CD14-positive monocyte (primary cell): ENCODE measurements at regions of chr14 and their contacts with region 1.

Region 1: DNA sequence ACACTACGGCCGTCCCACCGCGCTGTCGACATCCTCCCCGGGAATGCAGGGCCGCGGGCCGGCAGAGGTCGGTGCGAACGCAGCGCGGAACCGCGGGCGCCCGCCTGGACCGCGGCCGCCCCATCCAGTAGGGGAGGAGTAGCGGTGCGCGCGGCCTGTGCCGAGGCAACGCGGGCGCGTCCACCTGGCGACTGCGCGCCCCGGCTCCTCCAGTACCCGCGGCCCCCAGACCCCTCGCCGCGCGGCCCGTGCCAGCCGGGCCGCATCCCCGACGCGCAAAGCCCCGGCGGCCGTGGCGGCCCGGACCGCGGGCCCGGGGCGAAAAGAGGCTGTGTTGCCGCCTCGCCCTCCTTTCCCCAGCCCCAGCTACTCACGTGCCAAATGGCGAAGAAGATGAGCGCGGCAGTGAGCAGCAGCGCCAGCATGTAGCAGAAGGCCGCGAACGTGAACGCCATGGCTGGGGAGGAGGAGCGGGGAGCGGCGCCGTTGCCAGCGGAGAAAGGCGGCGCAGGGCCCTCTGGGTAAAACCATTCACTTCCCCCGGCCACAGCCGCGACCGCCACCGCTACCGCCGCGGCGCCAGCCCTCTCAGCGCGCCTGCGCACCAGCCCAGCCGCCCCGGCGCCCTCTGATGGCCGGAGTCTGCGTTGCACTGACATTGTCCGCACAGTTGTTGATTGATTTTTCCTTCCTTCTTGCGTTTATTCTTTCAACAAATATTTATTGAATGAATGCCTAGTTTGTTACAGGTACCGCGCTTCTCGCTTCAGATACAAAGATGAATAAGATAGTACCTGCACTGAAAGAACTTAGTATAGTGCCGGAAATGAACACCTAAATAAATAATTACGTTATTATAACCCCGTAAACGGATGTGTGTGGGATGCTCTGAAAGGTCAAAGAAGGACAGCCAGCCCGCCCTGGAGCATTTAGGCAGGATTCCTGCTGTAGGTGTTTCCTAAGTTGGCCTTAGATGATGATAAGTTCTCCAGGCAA is at the start of gene CNIH1:
- DNase-seq: peak; percentile 89 to 91 (median 90)
- H3K4me3 ChIP-seq: peak within 1 kb of the TSS; percentile 55 to 90 (median 77)
- H3K4me3 Mint-ChIP-seq: peak within 1 kb of the TSS; percentile 76 to 92
- H3K27ac ChIP-seq: peak within 1 kb of the TSS; percentile 83 to 86
- H3K27ac Mint-ChIP-seq: peak within 1 kb of the TSS; percentile 83 to 92 (median 87)
- H3K4me1 ChIP-seq: peaks cover 22 to 32% of the 10 kb centered on the region in 2 donors
- H3K4me1 Mint-ChIP-seq: peaks cover 41% of the 10 kb centered on the region
- H3K27me3 ChIP-seq: no peaks in the 10 kb centered on the region
- H3K27me3 Mint-ChIP-seq: no peaks in the 10 kb centered on the region
- CTCF ChIP-seq: peak; percentile 92
- polyA plus RNA-seq, gene CNIH1: 109 to 162 (median 138) TPM

Region 2: DNA sequence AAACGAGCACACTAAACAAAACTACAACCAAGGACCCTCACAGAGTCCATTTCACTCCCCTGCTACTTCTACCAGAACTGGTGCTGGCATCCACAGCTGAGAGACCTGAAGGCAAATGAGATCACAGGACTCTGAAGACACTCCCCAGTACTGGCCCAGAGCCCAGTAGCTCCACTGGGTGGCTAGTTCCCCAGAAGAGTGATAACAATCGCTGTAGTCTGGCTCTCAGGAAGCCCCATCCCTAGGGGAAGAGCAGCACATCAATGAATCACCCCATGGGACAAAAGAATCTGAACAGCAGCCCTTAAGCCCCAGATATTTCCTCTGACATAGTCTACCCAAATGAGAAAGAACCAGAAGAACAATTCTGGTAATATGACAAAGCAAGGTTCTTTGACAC is 293.9 kb before region 1 on chr14:
- intact Hi-C with region 1: no loop called
- DNase-seq: no peak
- H3K4me3 ChIP-seq: no peak overlapping the region
- H3K4me3 Mint-ChIP-seq: no peak overlapping the region
- H3K27ac ChIP-seq: no peak overlapping the region
- H3K27ac Mint-ChIP-seq: no peak overlapping the region
- H3K4me1 ChIP-seq: no peaks in the 10 kb centered on the region
- H3K4me1 Mint-ChIP-seq: no peaks in the 10 kb centered on the region
- H3K27me3 ChIP-seq: no peaks in the 10 kb centered on the region
- H3K27me3 Mint-ChIP-seq: peaks cover 0 to under 1% (median 0%) of the 10 kb centered on the region in 3 donors
- CTCF ChIP-seq: no peak

Region 3: GRCh38 chr14:54396493-54397335 is 44.5 kb before region 1 on chr14 and contains the start of gene CDKN3:
- intact Hi-C with region 1: loop called (anchors 5 kb)
- DNase-seq: peak; percentile 97 to 99 (median 98)
- H3K4me3 ChIP-seq: peak within 1 kb of the TSS; percentile 85 to 96 (median 90)
- H3K4me3 Mint-ChIP-seq: peak within 1 kb of the TSS; percentile 83 to 93
- H3K27ac ChIP-seq: peak within 1 kb of the TSS in 1 of 2 donors; percentile 78
- H3K27ac Mint-ChIP-seq: peak within 1 kb of the TSS in 6 of 7 donors; percentile 20 to 85 (median 72)
- H3K4me1 ChIP-seq: peaks cover 27 to 31% of the 10 kb centered on the region in 2 donors
- H3K4me1 Mint-ChIP-seq: peaks cover 25% of the 10 kb centered on the region
- H3K27me3 ChIP-seq: no peaks in the 10 kb centered on the region
- H3K27me3 Mint-ChIP-seq: peaks cover 0 to 2% (median under 1%) of the 10 kb centered on the region in 3 donors
- CTCF ChIP-seq: no peak
- polyA plus RNA-seq, gene CDKN3: 0.45 to 1.8 (median 0.65) TPM

Region 4: DNA sequence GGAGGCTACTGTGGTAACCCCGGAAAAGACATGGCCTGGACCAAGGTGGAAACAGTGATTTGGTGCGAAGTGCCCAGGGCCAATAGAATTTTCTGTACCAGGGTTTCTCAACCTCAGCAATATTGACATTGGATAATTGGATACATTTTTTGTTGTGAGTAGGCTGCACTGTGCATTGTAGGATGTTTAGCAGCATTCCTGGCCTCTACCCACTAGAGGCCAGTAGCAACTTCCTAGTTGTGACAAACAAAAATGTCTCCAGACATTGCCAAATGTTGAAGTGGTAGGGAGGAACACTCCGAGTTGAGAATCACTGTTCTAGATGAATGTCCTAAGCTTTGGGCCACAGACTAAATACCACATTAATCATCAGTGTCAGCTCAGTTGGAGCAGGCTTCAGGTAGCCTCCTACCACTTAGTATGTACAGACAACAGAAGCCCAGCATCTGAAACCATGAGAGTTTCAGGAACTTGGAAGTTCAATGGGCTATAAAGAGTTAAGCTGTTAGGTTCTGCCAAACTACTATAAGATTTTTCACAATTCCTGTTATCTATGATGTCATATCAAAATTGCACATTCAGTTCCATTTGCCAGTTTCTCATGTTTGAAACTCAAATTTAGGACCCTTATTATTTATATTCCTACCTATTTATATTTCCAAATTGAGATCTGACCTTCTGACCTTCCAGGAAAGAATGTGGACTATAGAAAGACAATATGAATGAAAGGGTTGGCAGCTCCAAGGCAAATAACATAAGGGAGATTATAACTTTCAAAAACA is 62.5 kb after region 1 on chr14:
- intact Hi-C with region 1: loop called in 1 of 2 experiments (anchors 5 kb)
- DNase-seq: peak; percentile 59 to 86 (median 71)
- H3K4me3 ChIP-seq: peak overlapping the region in 1 of 3 experiments; percentile 34
- H3K4me3 Mint-ChIP-seq: no peak overlapping the region
- H3K27ac ChIP-seq: peak overlapping the region; percentile 69 to 77
- H3K27ac Mint-ChIP-seq: peak overlapping the region; percentile 86 to 96 (median 92)
- H3K4me1 ChIP-seq: peaks cover 36 to 42% of the 10 kb centered on the region in 2 donors
- H3K4me1 Mint-ChIP-seq: peaks cover 35% of the 10 kb centered on the region
- H3K27me3 ChIP-seq: no peaks in the 10 kb centered on the region
- H3K27me3 Mint-ChIP-seq: peaks cover 0 to 11% (median 5%) of the 10 kb centered on the region in 3 donors
- CTCF ChIP-seq: peak; percentile 69

Region 5: DNA sequence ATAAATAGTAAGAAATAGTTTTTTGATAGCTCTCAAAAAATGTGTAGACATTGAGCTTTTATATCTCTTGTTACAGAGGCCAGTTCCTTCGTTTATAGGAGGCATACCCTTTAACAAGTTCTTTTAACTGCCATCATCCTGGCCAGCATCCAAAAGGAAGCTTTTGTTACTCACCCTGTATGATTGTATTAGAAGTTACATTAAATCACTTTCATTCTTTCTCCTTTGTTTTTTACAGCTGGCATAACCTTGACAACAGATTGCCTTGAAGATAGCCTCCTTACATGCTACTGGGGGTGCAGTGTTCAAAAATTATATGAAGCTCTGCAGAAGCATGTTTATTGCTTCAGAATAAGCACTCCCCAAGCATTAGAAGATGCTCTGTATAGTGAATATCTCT is 88.6 kb after region 1 on chr14:
- intact Hi-C with region 1: no loop called
- DNase-seq: no peak
- H3K4me3 ChIP-seq: no peak overlapping the region
- H3K4me3 Mint-ChIP-seq: no peak overlapping the region
- H3K27ac ChIP-seq: no peak overlapping the region
- H3K27ac Mint-ChIP-seq: no peak overlapping the region
- H3K4me1 ChIP-seq: no peaks in the 10 kb centered on the region
- H3K4me1 Mint-ChIP-seq: no peaks in the 10 kb centered on the region
- H3K27me3 ChIP-seq: no peaks in the 10 kb centered on the region
- H3K27me3 Mint-ChIP-seq: no peaks in the 10 kb centered on the region
- CTCF ChIP-seq: no peak

Region 6: GRCh38 chr14:55699131-55700057 is 1258.2 kb after region 1 on chr14:
- intact Hi-C with region 1: no loop called
- DNase-seq: no peak
- H3K4me3 ChIP-seq: no peak overlapping the region
- H3K4me3 Mint-ChIP-seq: no peak overlapping the region
- H3K27ac ChIP-seq: no peak overlapping the region
- H3K27ac Mint-ChIP-seq: no peak overlapping the region
- H3K4me1 ChIP-seq: no peaks in the 10 kb centered on the region
- H3K4me1 Mint-ChIP-seq: no peaks in the 10 kb centered on the region
- H3K27me3 ChIP-seq: no peaks in the 10 kb centered on the region
- H3K27me3 Mint-ChIP-seq: peaks cover 0 to 2% (median 0%) of the 10 kb centered on the region in 3 donors
- CTCF ChIP-seq: no peak